ENCODE measurements at regions of chr5 and their contacts with region 1.

Region 1: DNA sequence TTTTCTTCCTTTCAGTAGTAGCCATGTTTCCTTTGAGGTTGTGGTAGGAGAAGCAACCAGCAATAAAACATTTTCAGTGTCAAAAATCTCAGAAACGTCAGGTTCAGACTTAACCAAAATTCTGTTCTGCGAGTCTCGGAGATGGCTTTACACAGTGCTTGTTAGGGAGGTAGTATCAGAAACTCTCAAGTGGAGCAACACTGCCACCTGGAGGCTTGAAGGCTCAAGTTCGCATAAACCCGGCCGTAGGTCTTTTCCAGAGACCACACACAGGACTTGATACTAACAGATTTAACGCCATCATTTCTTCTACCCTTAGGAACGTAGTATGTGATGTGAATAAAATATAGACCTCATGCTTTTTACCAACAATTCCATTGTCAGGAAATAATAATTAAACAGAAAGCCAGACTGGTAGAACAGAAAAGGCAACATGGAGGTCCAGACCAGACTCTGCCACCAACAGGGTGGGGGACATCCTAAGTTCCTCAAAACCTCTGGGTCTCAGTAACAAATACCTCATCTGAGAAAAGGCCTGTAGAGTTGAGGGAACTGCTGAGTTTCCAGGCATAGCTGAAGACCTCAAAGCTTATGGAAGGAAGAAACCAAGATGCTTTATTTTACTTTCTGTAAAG is 8.5 kb downstream of the PTGER4 start:
- DNase-seq: peak; percentile 90
- H3K4me3 Mint-ChIP-seq: no peak overlapping the region
- H3K27ac Mint-ChIP-seq: no peak overlapping the region
- H3K4me1 Mint-ChIP-seq: peaks cover 43% of the 10 kb centered on the region
- H3K27me3 Mint-ChIP-seq: no peaks in the 10 kb centered on the region
- CTCF ChIP-seq: peak; percentile 77

Region 2: GRCh38 chr5:39578887-39579497 is 1109.3 kb before region 1 on chr5:
- CTCF ChIA-PET with region 1: interaction called, 3 read pairs
- POLR2A ChIA-PET with region 1: no interaction called
- intact Hi-C with region 1: loop called (anchors 1 kb)
- DNase-seq: peak; percentile 13
- H3K4me3 Mint-ChIP-seq: no peak overlapping the region
- H3K27ac Mint-ChIP-seq: no peak overlapping the region
- H3K4me1 Mint-ChIP-seq: peaks cover 5% of the 10 kb centered on the region
- H3K27me3 Mint-ChIP-seq: no peaks in the 10 kb centered on the region
- CTCF ChIP-seq: peak; percentile 54

Region 3: GRCh38 chr5:39648532-39649213 is 1039.6 kb before region 1 on chr5:
- CTCF ChIA-PET with region 1: interaction called, 3 read pairs
- POLR2A ChIA-PET with region 1: no interaction called
- intact Hi-C with region 1: loop called (anchors 5 kb)
- DNase-seq: peak; percentile 85
- H3K4me3 Mint-ChIP-seq: no peak overlapping the region
- H3K27ac Mint-ChIP-seq: no peak overlapping the region
- H3K4me1 Mint-ChIP-seq: peaks cover 12% of the 10 kb centered on the region
- H3K27me3 Mint-ChIP-seq: no peaks in the 10 kb centered on the region
- CTCF ChIP-seq: no peak

Region 4: GRCh38 chr5:40021007-40021406 is 667.2 kb before region 1 on chr5:
- CTCF ChIA-PET with region 1: interaction called, 3 read pairs
- POLR2A ChIA-PET with region 1: no interaction called
- intact Hi-C with region 1: loop called (anchors 5 kb)
- DNase-seq: no peak
- H3K4me3 Mint-ChIP-seq: no peak overlapping the region
- H3K27ac Mint-ChIP-seq: no peak overlapping the region
- H3K4me1 Mint-ChIP-seq: peaks cover 7% of the 10 kb centered on the region
- H3K27me3 Mint-ChIP-seq: no peaks in the 10 kb centered on the region
- CTCF ChIP-seq: no peak

Region 5: DNA sequence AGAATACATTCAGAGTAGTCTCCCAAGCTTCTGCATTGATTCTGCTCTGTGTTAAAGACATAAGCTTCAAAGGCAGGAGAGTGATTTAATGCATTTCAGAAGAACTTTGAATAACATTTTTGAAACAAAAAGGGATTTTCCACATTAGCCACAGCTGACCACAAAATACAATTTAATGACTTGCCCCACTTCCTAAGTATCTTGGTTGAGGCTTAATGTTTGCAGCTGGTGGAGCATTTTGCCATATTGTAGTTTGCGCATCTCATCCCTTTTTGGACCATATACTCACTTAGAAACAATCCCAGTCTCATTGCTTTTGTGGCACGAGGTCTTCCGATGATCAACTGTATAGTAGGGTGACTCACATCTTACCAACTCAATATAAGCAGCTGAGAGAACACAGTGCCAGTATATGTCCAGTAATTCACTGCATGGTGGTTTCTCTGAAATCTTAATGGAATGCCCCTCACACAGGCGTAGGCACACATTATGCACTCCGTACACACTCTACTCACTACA is 464.3 kb before region 1 on chr5:
- CTCF ChIA-PET with region 1: no interaction called
- POLR2A ChIA-PET with region 1: no interaction called
- intact Hi-C with region 1: loop called (anchors 10 kb)
- DNase-seq: peak; percentile 58
- H3K4me3 Mint-ChIP-seq: no peak overlapping the region
- H3K27ac Mint-ChIP-seq: no peak overlapping the region
- H3K4me1 Mint-ChIP-seq: peaks cover 9% of the 10 kb centered on the region
- H3K27me3 Mint-ChIP-seq: no peaks in the 10 kb centered on the region
- CTCF ChIP-seq: no peak

Region 6: GRCh38 chr5:40416588-40416987 is 271.7 kb before region 1 on chr5:
- CTCF ChIA-PET with region 1: no interaction called
- POLR2A ChIA-PET with region 1: no interaction called
- intact Hi-C with region 1: no loop called
- DNase-seq: no peak
- H3K4me3 Mint-ChIP-seq: no peak overlapping the region
- H3K27ac Mint-ChIP-seq: no peak overlapping the region
- H3K4me1 Mint-ChIP-seq: peaks cover 3% of the 10 kb centered on the region
- H3K27me3 Mint-ChIP-seq: no peaks in the 10 kb centered on the region
- CTCF ChIP-seq: no peak

Region 7: GRCh38 chr5:40507095-40507494 is 181.1 kb before region 1 on chr5:
- CTCF ChIA-PET with region 1: interaction called, 4 read pairs
- POLR2A ChIA-PET with region 1: no interaction called
- intact Hi-C with region 1: loop called (anchors 1 kb)
- DNase-seq: no peak
- H3K4me3 Mint-ChIP-seq: no peak overlapping the region
- H3K27ac Mint-ChIP-seq: no peak overlapping the region
- H3K4me1 Mint-ChIP-seq: no peaks in the 10 kb centered on the region
- H3K27me3 Mint-ChIP-seq: no peaks in the 10 kb centered on the region
- CTCF ChIP-seq: no peak

Region 8: GRCh38 chr5:40879163-40879942 is 191.1 kb after region 1 on chr5:
- CTCF ChIA-PET with region 1: interaction called, 3 read pairs
- POLR2A ChIA-PET with region 1: no interaction called
- intact Hi-C with region 1: loop called (anchors 1 kb)
- DNase-seq: peak; percentile 38
- H3K4me3 Mint-ChIP-seq: no peak overlapping the region
- H3K27ac Mint-ChIP-seq: no peak overlapping the region
- H3K4me1 Mint-ChIP-seq: no peaks in the 10 kb centered on the region
- H3K27me3 Mint-ChIP-seq: no peaks in the 10 kb centered on the region
- CTCF ChIP-seq: peak; percentile 37

Measured in MCF 10A (cell line).